Transverse colon (tissue), 4 donors: ENCODE measurements at regions of chr9 and their contacts with region 1.

Region 1: DNA sequence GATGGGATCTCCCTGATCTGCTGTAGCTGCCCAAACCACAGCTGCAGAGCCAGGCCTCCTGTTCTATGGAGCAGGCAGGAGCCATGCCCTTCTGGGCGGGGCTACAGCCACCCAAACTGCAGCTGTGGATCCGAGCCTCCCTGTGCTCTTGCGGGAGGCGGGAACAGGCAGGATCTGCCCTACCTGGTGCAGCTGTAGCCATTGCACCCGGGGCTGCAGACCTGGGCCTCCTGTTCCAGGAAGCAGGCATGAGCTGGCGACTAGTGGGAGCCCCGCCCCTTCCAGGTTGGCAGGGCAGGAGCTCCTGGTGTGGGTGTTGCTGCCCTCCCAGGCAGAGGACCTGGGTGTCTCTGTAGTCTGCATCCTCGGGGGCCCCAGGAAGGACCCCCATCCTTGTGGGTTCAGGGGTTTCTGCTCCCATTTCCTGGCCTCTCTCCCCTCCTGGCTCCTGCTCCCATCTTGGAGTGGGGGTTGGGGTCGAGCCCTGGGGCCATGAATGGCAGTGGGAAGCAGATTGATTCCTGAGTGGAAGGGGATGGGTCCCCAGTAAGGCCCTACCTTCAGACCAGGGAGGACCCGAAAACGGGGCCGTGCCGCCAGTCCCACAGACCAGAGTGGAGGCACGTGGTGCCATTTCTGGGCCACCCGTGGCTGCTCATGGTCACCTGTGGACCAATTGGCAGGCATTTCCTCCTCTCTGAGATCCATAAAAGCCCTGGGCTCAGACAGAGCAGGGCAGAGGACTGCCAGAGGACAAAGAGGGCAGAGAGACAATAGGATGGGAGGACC is 22.9 kb upstream of the UNC13B start:
- DNase-seq: no peak
- H3K4me3 ChIP-seq: no peak overlapping the region
- H3K27ac ChIP-seq: no peak overlapping the region
- H3K4me1 ChIP-seq: no peaks in the 10 kb centered on the region
- H3K27me3 ChIP-seq: no peaks in the 10 kb centered on the region
- CTCF ChIP-seq: no peak
- EP300 ChIP-seq: no peak
- POLR2A ChIP-seq: no peak

Region 2: DNA sequence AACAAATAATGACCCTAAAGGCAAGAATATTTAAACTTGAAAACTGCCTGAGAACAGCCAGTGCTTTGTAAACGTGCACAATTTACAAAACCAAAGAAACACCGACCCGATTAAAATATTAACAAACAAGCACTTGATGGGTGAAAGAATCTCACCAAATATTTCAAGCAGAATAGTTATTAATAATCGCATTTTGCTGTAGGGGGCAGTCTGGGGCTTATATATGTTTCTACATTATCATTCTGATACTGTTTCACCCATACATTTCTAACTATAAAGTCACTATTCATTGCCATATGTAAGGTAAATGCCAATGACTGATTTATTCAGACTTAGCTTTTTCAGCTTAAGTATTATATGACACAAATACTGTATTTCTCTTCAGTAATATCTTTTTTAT is 1127.9 kb before region 1 on chr9:
- in situ Hi-C with region 1: no loop called
- intact Hi-C with region 1: no loop called
- DNase-seq: no peak
- H3K4me3 ChIP-seq: no peak overlapping the region
- H3K27ac ChIP-seq: no peak overlapping the region
- H3K4me1 ChIP-seq: no peaks in the 10 kb centered on the region
- H3K27me3 ChIP-seq: no peaks in the 10 kb centered on the region
- CTCF ChIP-seq: peak in 1 of 5 experiments; percentile 17
- EP300 ChIP-seq: no peak
- POLR2A ChIP-seq: no peak

Region 3: DNA sequence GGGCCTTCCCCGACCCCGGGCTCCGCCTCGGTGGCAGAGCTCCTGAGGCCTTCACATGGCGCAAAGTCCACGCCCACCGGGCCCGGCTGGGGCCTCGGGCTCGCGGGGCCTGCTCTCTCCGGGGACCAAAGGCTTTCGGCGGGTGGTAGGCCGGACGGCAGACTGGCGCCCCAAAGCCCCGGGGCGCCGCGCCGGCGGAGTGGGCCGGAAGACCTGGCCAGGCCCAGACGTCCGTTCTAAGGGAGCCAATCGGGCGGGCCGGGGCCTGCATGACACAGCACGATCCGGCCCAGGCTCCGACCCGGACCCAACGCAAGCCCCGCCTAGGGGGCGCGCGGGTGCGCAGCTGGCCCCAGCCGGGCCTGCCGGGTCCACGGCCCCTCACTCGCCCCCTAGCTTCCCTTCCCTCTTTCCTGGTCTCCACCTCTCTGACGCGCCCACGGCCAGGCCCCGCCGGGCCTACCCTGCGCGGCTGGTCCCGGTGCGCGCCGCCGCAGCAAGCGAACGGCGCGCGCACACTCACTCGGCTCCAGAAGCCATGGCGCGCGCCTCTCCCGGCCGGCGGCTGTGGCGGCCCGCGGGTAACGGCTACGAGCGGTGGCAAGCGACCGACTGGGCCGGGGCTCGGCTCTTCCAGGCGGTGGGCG is 66.9 kb before region 1 on chr9:
- in situ Hi-C with region 1: no loop called
- intact Hi-C with region 1: no loop called
- DNase-seq: peak; percentile 85
- H3K4me3 ChIP-seq: peak overlapping the region; percentile 83 to 99 (median 94)
- H3K27ac ChIP-seq: peak overlapping the region; percentile 100
- H3K4me1 ChIP-seq: peaks cover 15 to 38% (median 26%) of the 10 kb centered on the region in 4 donors
- H3K27me3 ChIP-seq: no peaks in the 10 kb centered on the region
- CTCF ChIP-seq: peak in 4 of 5 experiments; percentile 11 to 49 (median 26)
- EP300 ChIP-seq: no peak
- POLR2A ChIP-seq: no peak

Region 4: DNA sequence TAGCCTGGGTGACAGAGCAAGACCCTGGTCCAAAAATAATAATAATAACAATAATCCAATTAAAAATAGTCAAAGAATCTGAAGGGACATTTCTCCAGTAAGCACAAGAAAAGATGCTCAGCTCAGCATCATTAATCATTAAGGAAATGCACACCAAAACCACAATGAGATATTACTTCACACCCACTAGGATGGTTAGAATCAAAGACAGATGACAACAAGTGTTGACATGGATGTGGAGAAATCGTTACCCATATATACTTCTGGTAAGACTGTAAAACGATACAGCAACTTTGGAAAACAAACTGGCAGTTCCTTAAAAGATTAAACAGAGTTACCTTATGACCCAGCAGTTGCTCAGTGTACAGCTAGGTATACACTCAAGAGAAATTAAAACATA is 53.8 kb before region 1 on chr9:
- in situ Hi-C with region 1: no loop called
- intact Hi-C with region 1: no loop called
- DNase-seq: no peak
- H3K4me3 ChIP-seq: no peak overlapping the region
- H3K27ac ChIP-seq: no peak overlapping the region
- H3K4me1 ChIP-seq: peaks cover 0 to 6% (median 3%) of the 10 kb centered on the region in 4 donors
- H3K27me3 ChIP-seq: no peaks in the 10 kb centered on the region
- CTCF ChIP-seq: no peak
- EP300 ChIP-seq: no peak
- POLR2A ChIP-seq: no peak

Region 5: GRCh38 chr9:35470894-35471293 is 332.0 kb after region 1 on chr9:
- in situ Hi-C with region 1: loop called in 1 of 4 experiments (anchors 25 kb)
- intact Hi-C with region 1: no loop called
- DNase-seq: no peak
- H3K4me3 ChIP-seq: no peak overlapping the region
- H3K27ac ChIP-seq: no peak overlapping the region
- H3K4me1 ChIP-seq: no peaks in the 10 kb centered on the region
- H3K27me3 ChIP-seq: peaks cover 1% of the 10 kb centered on the region
- CTCF ChIP-seq: no peak
- EP300 ChIP-seq: no peak
- POLR2A ChIP-seq: no peak